RWPE1 (cell line): ENCODE measurements at regions of chr2 and their contacts with region 1.

Region 1: DNA sequence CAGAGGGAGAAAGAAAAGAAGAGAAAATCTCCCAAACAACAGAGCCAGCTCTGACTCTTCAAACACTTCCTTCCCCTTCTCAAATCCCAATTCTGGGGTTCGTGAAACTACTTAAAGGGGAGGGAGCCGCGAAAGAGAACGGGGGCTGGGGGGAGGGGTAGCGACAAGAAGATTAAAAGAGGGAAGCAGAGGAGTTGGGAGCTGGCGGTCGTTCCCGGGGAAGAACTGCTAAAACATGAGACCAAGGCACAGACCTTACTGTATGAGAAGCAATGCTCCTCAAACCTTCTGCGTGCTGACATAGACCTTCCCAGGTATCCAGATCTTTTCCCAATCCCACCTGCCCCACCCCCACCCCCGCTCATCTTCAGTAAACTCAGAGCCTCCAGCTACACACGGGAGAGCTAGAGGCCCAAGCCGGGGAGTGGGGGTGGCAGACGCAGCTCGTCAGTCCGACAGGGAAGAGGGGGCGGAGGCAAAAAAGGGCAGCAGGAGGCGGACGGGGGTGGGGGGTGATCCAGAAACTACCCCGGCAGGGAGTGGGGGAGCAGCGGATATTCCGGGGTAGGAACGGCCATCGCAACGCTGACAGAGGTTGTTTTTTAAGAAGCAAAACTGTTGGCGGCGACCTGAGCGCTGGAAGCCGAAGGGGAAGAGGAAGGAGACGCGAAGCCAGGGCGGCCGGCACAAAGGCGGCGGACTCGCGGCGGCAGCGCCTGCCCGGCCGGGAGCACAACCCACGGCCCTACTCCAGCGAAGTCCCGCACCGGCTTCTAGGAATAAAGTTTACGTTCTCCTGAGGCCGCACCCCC is 1.0 kb downstream of the BAZ2B start:
- DNase-seq: peak; percentile 80
- H3K27ac ChIP-seq: peak overlapping the region; percentile 98
- CTCF ChIP-seq: no peak

Region 2: GRCh38 chr2:159516241-159516766 is 99.0 kb before region 1 on chr2:
- CTCF ChIA-PET with region 1: no interaction called
- POLR2A ChIA-PET with region 1: interaction called, 10 read pairs
- DNase-seq: peak; percentile 69
- H3K27ac ChIP-seq: no peak overlapping the region
- CTCF ChIP-seq: no peak; the same call in 1 of the 2 replicates

Region 3: DNA sequence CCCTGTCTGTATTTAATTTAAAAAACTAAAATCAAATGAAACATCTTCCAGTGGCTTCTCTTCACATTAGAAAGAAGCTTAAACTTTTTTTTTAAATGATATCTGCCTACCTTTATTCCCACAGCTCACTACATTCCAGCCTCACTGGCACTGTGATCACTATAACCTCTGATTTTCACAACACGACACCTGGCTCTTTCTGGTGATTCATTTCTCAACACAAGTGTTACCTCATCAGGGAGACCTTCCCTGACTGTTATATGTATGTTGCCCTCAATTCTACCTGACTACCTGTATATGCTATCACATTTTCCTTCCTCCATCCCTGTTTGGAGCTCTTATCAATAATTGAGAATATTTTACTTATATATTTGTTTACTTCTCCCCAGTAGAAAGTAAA is 75.6 kb before region 1 on chr2:
- CTCF ChIA-PET with region 1: no interaction called
- POLR2A ChIA-PET with region 1: no interaction called
- DNase-seq: no peak
- H3K27ac ChIP-seq: no peak overlapping the region
- CTCF ChIP-seq: no peak

Region 4: DNA sequence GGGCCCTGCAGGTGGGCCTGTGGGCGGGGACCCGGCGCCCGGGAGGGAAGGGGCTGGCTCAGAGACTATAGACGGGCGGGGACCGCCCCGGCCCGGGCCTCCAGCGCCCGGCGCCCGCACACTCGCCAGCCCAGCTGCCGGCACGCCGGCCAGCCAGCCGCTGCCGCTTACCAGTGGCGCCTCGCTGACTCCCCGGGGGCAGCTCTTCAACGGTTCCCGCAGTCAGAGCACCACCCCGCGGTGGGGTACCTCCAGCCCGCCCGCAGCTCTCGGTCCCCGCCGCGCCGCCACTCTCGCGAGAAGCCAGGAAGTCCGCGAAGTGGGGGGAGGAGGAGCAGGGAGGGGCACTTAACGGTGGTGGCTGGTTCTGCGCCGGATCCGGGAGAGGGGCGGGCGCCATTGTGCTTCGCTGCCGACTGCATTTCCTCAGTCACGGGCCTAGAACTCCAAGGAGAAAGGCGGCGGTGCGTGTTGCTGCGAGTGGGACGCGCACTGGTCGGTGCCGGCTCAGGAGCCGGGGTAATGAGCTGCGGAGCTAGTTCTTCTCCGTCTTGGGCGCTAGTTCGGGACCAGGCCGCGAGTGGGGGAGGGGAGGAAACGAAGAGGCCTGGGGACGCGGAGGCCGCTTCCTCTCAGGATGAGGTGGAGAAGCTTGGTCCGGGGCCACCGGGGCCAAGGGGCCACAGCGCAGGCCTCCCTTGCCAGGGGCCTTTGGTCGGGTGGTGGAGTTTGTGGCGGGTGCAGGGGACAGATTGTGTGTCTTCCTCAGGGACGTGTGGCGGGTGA is 97.0 kb after region 1 on chr2 and contains the start of gene MARCHF7:
- CTCF ChIA-PET with region 1: no interaction called
- POLR2A ChIA-PET with region 1: interaction called, 12 read pairs
- DNase-seq: peak; percentile 98
- H3K27ac ChIP-seq: peak within 1 kb of the TSS; percentile 92
- CTCF ChIP-seq: peak; percentile 82